Activated CD4-positive, alpha-beta memory T cell treated with anti-CD3 and anti-CD28 coated beads, Interleukin-2, amount 10 ng/mL, durations not matched to agents 7 days and 5 days (primary cell): ENCODE measurements at regions of chr15 and their contacts with region 1.

Region 1: DNA sequence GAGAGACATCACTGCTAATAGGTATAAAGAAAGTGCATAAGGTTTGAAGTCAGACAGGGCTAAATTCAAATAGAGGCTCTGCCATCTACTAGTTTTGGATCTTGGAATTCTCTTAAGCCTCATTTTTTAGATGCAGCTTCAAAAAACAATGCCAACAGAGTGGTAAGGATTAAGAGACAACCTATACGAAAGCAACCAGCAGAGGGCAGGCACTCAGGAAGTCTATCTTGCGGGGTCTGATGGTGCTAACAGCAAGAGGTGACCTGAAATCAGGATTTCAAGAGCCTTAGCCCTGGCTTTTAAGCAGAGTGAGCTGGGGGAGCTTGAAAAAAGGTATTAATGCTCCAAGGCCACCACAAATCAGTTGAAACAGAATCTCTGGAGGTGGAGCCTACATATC is 40.7 kb downstream of the LDHAL6B start:
- DNase-seq: peak; percentile 73
- H3K4me3 Mint-ChIP-seq: no peak overlapping the region
- H3K27ac Mint-ChIP-seq: peak overlapping the region; percentile 29
- H3K4me1 Mint-ChIP-seq: peaks cover 38% of the 10 kb centered on the region
- H3K27me3 Mint-ChIP-seq: peaks cover 4% of the 10 kb centered on the region

Region 2: DNA sequence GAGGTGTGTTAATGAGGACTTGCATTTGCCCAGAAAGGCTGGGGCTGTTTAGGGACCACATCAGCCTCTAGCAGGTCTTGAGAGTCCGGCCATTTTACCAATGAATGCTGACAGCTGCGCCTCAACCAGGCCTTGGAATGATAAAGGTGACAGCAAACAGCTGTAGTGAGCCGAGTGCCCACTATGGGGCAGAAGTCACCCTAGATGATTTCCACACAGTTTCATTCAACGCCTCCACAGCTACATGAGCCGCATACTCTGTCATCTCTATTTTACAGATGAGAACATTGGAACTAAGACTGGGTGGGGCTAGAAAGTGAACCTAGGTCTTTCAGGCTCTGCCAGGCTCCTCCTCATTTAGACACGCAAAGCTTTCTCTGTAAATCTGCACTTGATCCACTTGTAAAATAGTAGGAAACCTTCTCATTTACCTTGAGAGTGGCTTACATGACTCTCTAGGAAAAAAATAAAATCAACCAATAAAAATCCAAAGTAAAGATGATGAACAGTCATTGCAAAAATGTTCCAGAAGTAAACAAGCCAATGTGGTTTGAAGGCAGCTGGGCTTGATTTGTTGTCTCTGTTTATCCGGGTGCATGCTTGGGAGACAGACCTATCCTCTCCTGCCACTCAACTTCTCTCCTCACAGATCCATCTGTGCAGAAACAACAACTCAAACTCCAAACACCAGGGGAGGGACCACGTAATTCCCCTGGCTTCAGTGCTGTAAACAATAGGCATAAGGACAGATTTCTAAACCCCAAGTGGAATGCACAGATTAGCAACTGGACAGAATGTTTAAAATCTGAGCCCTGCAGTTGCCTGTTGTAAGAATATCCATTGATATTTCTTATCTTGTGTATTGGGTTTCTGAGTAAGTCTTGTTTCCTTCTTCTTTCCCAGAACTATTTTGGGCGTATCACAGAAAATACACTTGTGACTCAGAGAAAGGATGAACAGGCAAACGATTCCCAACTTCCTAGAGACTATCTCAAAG is 72.2 kb before region 1 on chr15:
- CTCF ChIA-PET with region 1: interaction called, 12 read pairs
- POLR2A ChIA-PET with region 1: no interaction called
- DNase-seq: peak; percentile 59
- H3K4me3 Mint-ChIP-seq: no peak overlapping the region
- H3K27ac Mint-ChIP-seq: no peak overlapping the region
- H3K4me1 Mint-ChIP-seq: peaks cover 18% of the 10 kb centered on the region
- H3K27me3 Mint-ChIP-seq: peaks cover 7% of the 10 kb centered on the region

Region 3: DNA sequence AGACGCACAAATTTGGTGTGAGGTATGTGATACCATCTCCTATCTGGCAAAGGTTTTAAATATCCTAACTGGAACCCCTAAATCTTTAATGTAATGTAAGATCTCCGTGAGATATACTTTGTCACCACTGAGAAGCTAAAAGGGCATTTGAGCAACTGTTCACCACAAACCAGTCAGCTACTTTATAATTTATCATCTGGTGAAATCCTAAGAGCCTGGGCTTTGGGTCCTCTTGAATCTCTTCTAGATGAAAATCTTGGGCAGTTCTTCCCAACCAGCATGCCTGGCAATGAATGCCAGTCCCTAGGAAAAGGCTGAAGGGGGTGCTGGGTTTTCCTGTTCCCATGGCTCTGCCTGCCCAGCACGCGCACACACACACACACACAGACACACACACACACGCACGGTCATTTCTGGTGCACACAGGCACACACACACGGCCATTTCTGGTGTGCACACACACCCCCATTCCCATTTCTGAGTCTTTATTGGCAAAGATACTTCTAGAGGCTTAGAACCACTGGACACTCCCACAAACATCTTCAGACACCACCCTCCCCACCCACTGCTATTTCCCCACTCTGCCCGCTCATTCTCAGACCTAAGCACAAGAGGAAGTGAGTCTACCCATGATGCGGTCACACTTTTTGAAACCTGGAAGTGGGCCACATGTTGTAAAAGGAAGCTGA is 52.7 kb after region 1 on chr15:
- CTCF ChIA-PET with region 1: interaction called, 33 read pairs
- POLR2A ChIA-PET with region 1: interaction called, 6 read pairs
- DNase-seq: peak; percentile 84
- H3K4me3 Mint-ChIP-seq: peak overlapping the region; percentile 28
- H3K27ac Mint-ChIP-seq: peak overlapping the region; percentile 81
- H3K4me1 Mint-ChIP-seq: peaks cover 66% of the 10 kb centered on the region
- H3K27me3 Mint-ChIP-seq: peaks cover 3% of the 10 kb centered on the region

Region 4: GRCh38 chr15:59410391-59410896 is 163.1 kb after region 1 on chr15:
- CTCF ChIA-PET with region 1: interaction called, 14 read pairs
- POLR2A ChIA-PET with region 1: no interaction called
- DNase-seq: no peak
- H3K4me3 Mint-ChIP-seq: no peak overlapping the region
- H3K27ac Mint-ChIP-seq: no peak overlapping the region
- H3K4me1 Mint-ChIP-seq: peaks cover 32% of the 10 kb centered on the region
- H3K27me3 Mint-ChIP-seq: peaks cover 22% of the 10 kb centered on the region

Region 5: GRCh38 chr15:59473226-59473625 is 225.9 kb after region 1 on chr15:
- CTCF ChIA-PET with region 1: interaction called, 10 read pairs
- POLR2A ChIA-PET with region 1: no interaction called
- DNase-seq: no peak
- H3K4me3 Mint-ChIP-seq: no peak overlapping the region
- H3K27ac Mint-ChIP-seq: no peak overlapping the region
- H3K4me1 Mint-ChIP-seq: no peaks in the 10 kb centered on the region
- H3K27me3 Mint-ChIP-seq: peaks cover 44% of the 10 kb centered on the region

Region 6: GRCh38 chr15:59501597-59501996 is 254.2 kb after region 1 on chr15:
- CTCF ChIA-PET with region 1: interaction called, 12 read pairs
- POLR2A ChIA-PET with region 1: no interaction called
- DNase-seq: no peak
- H3K4me3 Mint-ChIP-seq: no peak overlapping the region
- H3K27ac Mint-ChIP-seq: no peak overlapping the region
- H3K4me1 Mint-ChIP-seq: no peaks in the 10 kb centered on the region
- H3K27me3 Mint-ChIP-seq: peaks cover 7% of the 10 kb centered on the region